Aorta (tissue), 5 donors: ENCODE measurements at regions of chr7 and their contacts with region 1.

Region 1: DNA sequence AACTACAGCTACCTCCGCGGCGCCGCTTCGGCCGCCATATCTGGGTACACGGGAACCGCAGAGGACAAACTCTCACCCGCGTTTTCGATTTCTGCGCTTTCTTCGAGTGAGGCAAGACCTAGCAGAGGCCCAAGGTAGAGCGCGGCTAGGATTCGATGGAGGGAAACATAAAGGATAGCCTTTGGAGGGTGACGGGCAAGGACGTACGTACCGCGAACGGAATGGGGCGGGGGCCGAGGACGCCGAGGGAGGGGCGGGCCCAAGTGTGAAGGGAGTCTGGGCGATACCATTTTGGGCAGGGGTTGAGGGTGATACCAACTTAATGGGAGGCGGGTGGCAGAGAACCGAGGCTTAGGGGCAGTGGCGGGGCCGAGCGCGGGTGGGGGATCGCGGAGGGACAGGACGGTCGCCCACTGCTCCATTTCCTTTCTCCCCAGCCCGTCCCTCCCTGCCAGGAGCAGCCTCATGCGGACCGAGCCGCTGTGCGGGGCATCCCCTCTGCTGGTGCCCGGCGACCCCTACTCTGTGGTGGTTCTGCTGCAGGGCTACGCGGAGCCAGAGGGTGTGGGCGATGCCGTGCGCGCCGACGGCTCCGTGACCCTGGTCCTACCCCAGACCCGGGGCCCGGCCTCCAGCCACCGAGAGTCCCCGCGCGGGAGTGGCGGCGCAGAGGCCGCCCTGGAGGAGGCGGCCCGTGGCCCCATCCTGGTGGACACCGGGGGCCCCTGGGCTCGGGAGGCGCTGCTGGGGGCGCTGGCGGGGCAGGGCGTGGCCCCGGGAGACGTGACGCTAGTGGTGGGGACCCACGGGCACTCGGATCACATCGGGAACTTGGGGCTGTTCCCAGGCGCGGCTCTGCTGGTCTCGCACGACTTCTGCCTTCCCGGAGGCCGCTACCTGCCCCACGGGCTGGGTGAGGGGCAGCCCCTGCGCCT is at the start of gene MBLAC1:
- DNase-seq: peak; percentile 92 to 95
- ATAC-seq: peak; percentile 97
- H3K4me3 ChIP-seq: peak within 1 kb of the TSS; percentile 50 to 80
- H3K27ac ChIP-seq: peak within 1 kb of the TSS in 1 of 2 donors; percentile 83
- H3K4me1 ChIP-seq: no peaks in the 10 kb centered on the region
- H3K27me3 ChIP-seq: no peaks in the 10 kb centered on the region
- total RNA-seq, gene MBLAC1: 1.8 to 1.9 TPM

Region 2: GRCh38 chr7:99740573-99741440 is 386.4 kb before region 1 on chr7:
- intact Hi-C with region 1: no loop called
- DNase-seq: no peak
- ATAC-seq: no peak
- H3K4me3 ChIP-seq: no peak overlapping the region
- H3K27ac ChIP-seq: no peak overlapping the region
- H3K4me1 ChIP-seq: no peaks in the 10 kb centered on the region
- H3K27me3 ChIP-seq: no peaks in the 10 kb centered on the region

Region 3: GRCh38 chr7:100088621-100089457 is 38.4 kb before region 1 on chr7 and contains the start of gene COPS6:
- intact Hi-C with region 1: loop called in 1 of 2 experiments (anchors 5 kb)
- DNase-seq: peak; percentile 91 to 96
- ATAC-seq: peak; percentile 93
- H3K4me3 ChIP-seq: peak within 1 kb of the TSS; percentile 20 to 64
- H3K27ac ChIP-seq: peak within 1 kb of the TSS in 1 of 2 donors; percentile 4
- H3K4me1 ChIP-seq: no peaks in the 10 kb centered on the region
- H3K27me3 ChIP-seq: no peaks in the 10 kb centered on the region
- total RNA-seq, gene COPS6: 79.7 to 81.0 TPM

Region 4: GRCh38 chr7:100200693-100201092 is 73.5 kb after region 1 on chr7:
- intact Hi-C with region 1: no loop called
- DNase-seq: no peak
- ATAC-seq: no peak
- H3K4me3 ChIP-seq: no peak overlapping the region
- H3K27ac ChIP-seq: no peak overlapping the region
- H3K4me1 ChIP-seq: no peaks in the 10 kb centered on the region
- H3K27me3 ChIP-seq: no peaks in the 10 kb centered on the region

Region 5: GRCh38 chr7:100991631-100992030 is 864.4 kb after region 1 on chr7:
- intact Hi-C with region 1: no loop called
- DNase-seq: no peak
- ATAC-seq: no peak
- H3K4me3 ChIP-seq: no peak overlapping the region
- H3K27ac ChIP-seq: no peak overlapping the region
- H3K4me1 ChIP-seq: no peaks in the 10 kb centered on the region
- H3K27me3 ChIP-seq: no peaks in the 10 kb centered on the region